Naive thymus-derived CD4-positive, alpha-beta T cell (primary cell): ENCODE measurements at regions of chr11 and their contacts with region 1.

Region 1: GRCh38 chr11:65637794-65638317 is at the start of gene SIPA1:
- DNase-seq: peak; percentile 57 to 93 (median 74)
- ATAC-seq: peak; percentile 62
- H3K4me3 ChIP-seq: peak within 1 kb of the TSS; percentile 90
- H3K4me3 Mint-ChIP-seq: peak within 1 kb of the TSS; percentile 89 to 99 (median 95)
- H3K27ac ChIP-seq: peak within 1 kb of the TSS; percentile 97
- H3K27ac Mint-ChIP-seq: peak within 1 kb of the TSS; percentile 76 to 100 (median 97)
- H3K4me1 ChIP-seq: peaks cover 45 to 58% of the 10 kb centered on the region in 2 donors
- H3K4me1 Mint-ChIP-seq: peaks cover 26 to 52% (median 47%) of the 10 kb centered on the region in 7 donors
- H3K27me3 ChIP-seq: no peaks in the 10 kb centered on the region
- H3K27me3 Mint-ChIP-seq: no peaks in the 10 kb centered on the region
- total RNA-seq, gene SIPA1: 145 to 249 (median 198) TPM

Region 2: GRCh38 chr11:65662799-65663638 is 25.2 kb after region 1 on chr11 and contains the start of gene RELA:
- CTCF ChIA-PET with region 1: no interaction called
- POLR2A ChIA-PET with region 1: interaction called, 227 read pairs
- intact Hi-C with region 1: loop called (anchors 1 kb)
- DNase-seq: peak; percentile 84 to 92 (median 89)
- ATAC-seq: peak; percentile 92
- H3K4me3 ChIP-seq: peak within 1 kb of the TSS; percentile 85
- H3K4me3 Mint-ChIP-seq: peak within 1 kb of the TSS; percentile 86 to 93 (median 90)
- H3K27ac ChIP-seq: peak within 1 kb of the TSS; percentile 99
- H3K27ac Mint-ChIP-seq: peak within 1 kb of the TSS; percentile 86 to 95 (median 92)
- H3K4me1 ChIP-seq: peaks cover 20 to 33% of the 10 kb centered on the region in 2 donors
- H3K4me1 Mint-ChIP-seq: peaks cover 10 to 43% (median 31%) of the 10 kb centered on the region in 7 donors
- H3K27me3 ChIP-seq: no peaks in the 10 kb centered on the region
- H3K27me3 Mint-ChIP-seq: no peaks in the 10 kb centered on the region
- total RNA-seq, gene RELA: 106 to 303 (median 165) TPM

Region 3: DNA sequence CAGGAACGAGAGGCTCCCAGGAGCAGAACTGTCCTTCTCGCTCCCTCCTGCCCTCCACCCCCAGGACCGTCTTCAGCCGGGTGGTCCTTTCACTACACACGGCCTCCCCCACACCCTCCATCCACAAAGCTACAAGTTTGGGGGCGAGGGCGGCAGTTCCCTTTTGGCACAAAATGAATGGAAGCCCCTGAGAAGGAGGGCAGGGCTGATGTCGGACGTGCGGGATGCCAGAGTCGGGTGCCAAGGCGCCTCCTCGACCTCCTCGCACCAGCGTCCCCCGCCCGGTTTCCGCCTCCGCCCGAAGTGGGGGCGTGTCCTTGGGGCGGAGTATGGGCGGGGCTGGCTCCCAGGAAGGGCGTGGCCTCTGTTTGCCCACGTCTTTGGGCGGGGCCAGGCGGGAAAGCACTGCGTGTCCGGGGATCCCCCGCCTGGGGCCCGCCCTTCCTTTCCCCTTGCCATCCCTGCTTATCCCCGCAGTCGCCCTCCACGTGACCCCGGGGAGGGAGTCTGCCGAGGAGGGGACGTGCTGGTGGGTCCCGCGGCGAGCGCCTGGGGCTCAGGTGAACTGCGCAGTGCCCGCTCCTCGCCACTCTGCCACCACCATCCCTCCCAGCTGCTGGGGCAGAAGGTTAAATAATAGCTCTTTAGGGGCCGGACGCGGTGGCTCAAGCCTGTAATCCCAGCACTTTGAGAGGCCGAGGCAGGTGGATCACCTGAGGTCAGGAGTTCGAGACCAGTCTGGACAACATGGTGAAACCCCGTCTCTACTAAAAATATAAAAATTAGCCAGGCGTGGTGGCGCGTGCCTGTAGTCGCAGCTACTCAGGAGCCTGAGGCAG is 235.7 kb after region 1 on chr11:
- CTCF ChIA-PET with region 1: no interaction called
- POLR2A ChIA-PET with region 1: no interaction called
- intact Hi-C with region 1: loop called in 1 of 2 experiments (anchors 1 kb)
- DNase-seq: peak; percentile 93 to 100 (median 97)
- ATAC-seq: peak; percentile 99
- H3K4me3 ChIP-seq: peak overlapping the region; percentile 75
- H3K4me3 Mint-ChIP-seq: peak overlapping the region; percentile 84 to 97 (median 91)
- H3K27ac ChIP-seq: peak overlapping the region; percentile 88
- H3K27ac Mint-ChIP-seq: peak overlapping the region; percentile 71 to 92 (median 91)
- H3K4me1 ChIP-seq: peaks cover 10 to 22% of the 10 kb centered on the region in 2 donors
- H3K4me1 Mint-ChIP-seq: peaks cover 7 to 37% (median 18%) of the 10 kb centered on the region in 7 donors
- H3K27me3 ChIP-seq: no peaks in the 10 kb centered on the region
- H3K27me3 Mint-ChIP-seq: peaks cover 0 to 3% (median 0%) of the 10 kb centered on the region in 5 donors